ENCODE measurements at regions of chr1 and their contacts with region 1.

Region 1: DNA sequence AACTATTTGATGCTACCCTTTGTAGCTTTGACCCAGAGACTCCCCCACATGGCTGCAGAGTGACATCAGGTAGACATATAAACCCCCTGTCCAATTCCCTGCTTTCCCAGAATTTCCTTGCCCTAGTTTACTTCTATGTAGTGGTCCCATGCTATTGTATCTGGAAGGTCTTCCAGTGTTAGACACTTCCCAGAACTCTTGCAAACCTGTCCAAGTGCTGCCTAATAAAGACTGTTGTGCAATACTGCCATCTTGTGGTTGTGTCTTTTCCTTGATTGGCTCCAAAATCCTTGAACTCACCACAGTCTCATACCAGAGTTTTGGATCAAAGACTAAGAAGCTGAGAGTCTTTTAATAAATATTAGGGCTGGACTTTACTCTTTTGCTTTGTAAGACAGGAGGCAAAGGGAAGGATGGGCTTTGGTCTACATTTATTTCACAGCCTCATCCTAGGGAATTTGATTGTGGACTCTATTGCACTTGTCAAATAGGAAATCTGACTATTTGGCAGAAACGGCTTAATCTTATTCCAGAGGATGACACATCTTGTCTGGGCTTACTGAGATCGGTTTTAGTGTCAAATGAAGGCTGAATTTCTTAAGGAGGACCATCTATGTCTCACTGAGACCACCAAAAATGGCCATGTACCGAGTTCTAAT is 169.9 kb downstream of the LRRC7 start:
- DNase-seq: peak; percentile 61
- ATAC-seq: peak; percentile 89
- H3K4me3 ChIP-seq: no peak overlapping the region
- H3K27ac ChIP-seq: no peak overlapping the region
- H3K4me1 ChIP-seq: no peaks in the 10 kb centered on the region
- H3K27me3 ChIP-seq: no peaks in the 10 kb centered on the region
- CTCF ChIP-seq: peak; percentile 76
- EP300 ChIP-seq: no peak
- POLR2A ChIP-seq: no peak
- RAD21 ChIP-seq: peak; percentile 43; the same call in 1 of the 2 replicates

Region 2: DNA sequence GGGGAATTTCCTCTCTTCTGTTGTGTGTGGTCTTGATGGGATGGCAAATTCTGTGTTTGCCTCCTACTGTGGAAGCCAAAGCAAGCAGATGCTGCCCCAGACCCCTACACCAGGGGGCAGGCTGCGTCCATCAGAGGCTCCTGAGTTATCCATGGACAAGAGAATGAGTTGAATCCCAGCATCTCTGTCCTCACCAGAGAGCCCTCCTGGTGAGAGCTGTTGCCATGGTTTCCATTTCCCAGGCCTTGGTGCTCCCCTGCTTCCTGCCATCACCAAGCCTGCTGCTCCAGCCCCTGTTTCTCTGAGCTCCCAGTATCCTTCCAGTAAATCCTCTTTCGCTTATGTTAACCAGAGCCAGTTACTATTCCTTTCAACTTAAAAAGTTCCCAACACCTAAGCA is 1884.0 kb before region 1 on chr1:
- CTCF ChIA-PET with region 1: no interaction called
- POLR2A ChIA-PET with region 1: no interaction called
- in situ Hi-C with region 1: no loop called
- intact Hi-C with region 1: loop called (anchors 5 kb)
- DNase-seq: peak; percentile 25
- ATAC-seq: peak; percentile 94
- H3K4me3 ChIP-seq: no peak overlapping the region
- H3K27ac ChIP-seq: no peak overlapping the region
- H3K4me1 ChIP-seq: no peaks in the 10 kb centered on the region
- H3K27me3 ChIP-seq: peaks cover 0 to 1% of the 10 kb centered on the region in 2 experiments; a peak in 3 of 5 replicates
- CTCF ChIP-seq: peak; percentile 73
- EP300 ChIP-seq: no peak
- POLR2A ChIP-seq: no peak
- RAD21 ChIP-seq: 0 out of 2 replicates have a peak, but pooled peaks have one; percentile 26

Region 3: GRCh38 chr1:68120136-68120791 is 1617.4 kb before region 1 on chr1:
- CTCF ChIA-PET with region 1: interaction called, 15 read pairs
- POLR2A ChIA-PET with region 1: no interaction called
- in situ Hi-C with region 1: loop called (anchors 5 kb)
- intact Hi-C with region 1: loop called (anchors 1 kb)
- DNase-seq: peak; percentile 60
- ATAC-seq: peak; percentile 78
- H3K4me3 ChIP-seq: no peak overlapping the region
- H3K27ac ChIP-seq: no peak overlapping the region
- H3K4me1 ChIP-seq: peaks cover 8% of the 10 kb centered on the region
- H3K27me3 ChIP-seq: peaks cover 0 to 7% of the 10 kb centered on the region in 2 experiments; a peak in 3 of 5 replicates
- CTCF ChIP-seq: peak; percentile 86
- EP300 ChIP-seq: no peak
- POLR2A ChIP-seq: no peak
- RAD21 ChIP-seq: peak; percentile 66

Region 4: DNA sequence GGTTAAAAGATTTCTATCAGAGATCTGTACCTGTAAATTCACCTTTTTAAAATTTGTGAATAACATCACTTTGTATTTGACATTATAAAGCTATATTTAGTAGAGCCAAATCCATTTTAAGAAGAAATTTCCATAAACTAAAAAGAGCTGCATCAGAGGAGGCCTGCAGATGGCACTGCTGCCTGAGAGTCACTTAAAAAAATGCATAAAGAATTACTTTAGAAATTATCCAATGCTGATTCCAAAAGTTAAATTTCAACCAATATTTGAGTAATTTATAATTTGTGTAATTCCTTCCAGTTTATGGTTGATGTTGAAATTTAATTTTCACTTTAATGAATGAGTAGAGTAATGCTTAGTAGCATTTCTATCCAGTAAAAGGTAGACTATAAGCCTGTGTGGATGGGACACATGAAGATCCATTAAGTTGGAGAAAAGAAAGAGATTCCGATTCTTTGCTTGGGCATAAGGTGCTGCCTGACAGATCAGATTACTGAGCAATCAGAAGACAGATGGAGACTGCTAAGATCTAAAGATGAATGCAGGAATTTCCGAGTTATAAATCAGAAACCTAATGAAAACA is 1267.2 kb before region 1 on chr1:
- CTCF ChIA-PET with region 1: interaction called, 22 read pairs
- POLR2A ChIA-PET with region 1: no interaction called
- in situ Hi-C with region 1: loop called (anchors 5 kb)
- intact Hi-C with region 1: no loop called
- DNase-seq: peak; percentile 3
- ATAC-seq: peak; percentile 41; the same call in 1 of the 3 replicates
- H3K4me3 ChIP-seq: no peak overlapping the region
- H3K27ac ChIP-seq: no peak overlapping the region
- H3K4me1 ChIP-seq: no peaks in the 10 kb centered on the region
- H3K27me3 ChIP-seq: no peaks in the 10 kb centered on the region
- CTCF ChIP-seq: peak; percentile 41
- EP300 ChIP-seq: no peak
- POLR2A ChIP-seq: no peak
- RAD21 ChIP-seq: no peak

Region 5: GRCh38 chr1:68600049-68600661 is 1137.5 kb before region 1 on chr1:
- CTCF ChIA-PET with region 1: interaction called, 8 read pairs
- POLR2A ChIA-PET with region 1: no interaction called
- in situ Hi-C with region 1: no loop called
- intact Hi-C with region 1: loop called (anchors 1 kb)
- DNase-seq: peak; percentile 3
- ATAC-seq: no peak; the same call in 1 of the 3 replicates
- H3K4me3 ChIP-seq: no peak overlapping the region
- H3K27ac ChIP-seq: no peak overlapping the region
- H3K4me1 ChIP-seq: no peaks in the 10 kb centered on the region
- H3K27me3 ChIP-seq: no peaks in the 10 kb centered on the region
- CTCF ChIP-seq: peak; percentile 46
- EP300 ChIP-seq: no peak
- POLR2A ChIP-seq: no peak
- RAD21 ChIP-seq: no peak

Region 6: DNA sequence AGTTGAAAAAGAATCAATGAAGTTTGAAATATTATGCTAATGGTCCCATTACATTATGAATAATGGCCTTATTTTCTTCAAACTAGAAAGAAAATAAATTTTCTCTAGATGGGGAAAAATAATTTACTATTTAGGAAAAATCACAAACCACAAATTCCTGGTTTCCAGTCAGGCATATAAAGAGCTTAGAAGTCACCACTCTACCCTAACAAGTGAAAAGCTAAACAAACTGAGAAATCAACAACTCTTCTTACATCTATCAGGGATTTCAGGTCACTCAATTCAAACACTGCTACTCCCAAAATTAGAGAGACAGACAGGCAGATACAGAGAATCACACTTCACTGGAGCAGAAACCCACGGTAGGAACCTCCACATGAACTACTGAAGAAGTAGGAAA is 252.0 kb before region 1 on chr1:
- CTCF ChIA-PET with region 1: no interaction called
- POLR2A ChIA-PET with region 1: no interaction called
- in situ Hi-C with region 1: no loop called
- intact Hi-C with region 1: no loop called
- DNase-seq: no peak
- ATAC-seq: no peak
- H3K4me3 ChIP-seq: no peak overlapping the region
- H3K27ac ChIP-seq: no peak overlapping the region
- H3K4me1 ChIP-seq: no peaks in the 10 kb centered on the region
- H3K27me3 ChIP-seq: no peaks in the 10 kb centered on the region; a peak in 1 of 5 replicates
- CTCF ChIP-seq: no peak
- EP300 ChIP-seq: no peak
- POLR2A ChIP-seq: no peak
- RAD21 ChIP-seq: no peak

Region 7: DNA sequence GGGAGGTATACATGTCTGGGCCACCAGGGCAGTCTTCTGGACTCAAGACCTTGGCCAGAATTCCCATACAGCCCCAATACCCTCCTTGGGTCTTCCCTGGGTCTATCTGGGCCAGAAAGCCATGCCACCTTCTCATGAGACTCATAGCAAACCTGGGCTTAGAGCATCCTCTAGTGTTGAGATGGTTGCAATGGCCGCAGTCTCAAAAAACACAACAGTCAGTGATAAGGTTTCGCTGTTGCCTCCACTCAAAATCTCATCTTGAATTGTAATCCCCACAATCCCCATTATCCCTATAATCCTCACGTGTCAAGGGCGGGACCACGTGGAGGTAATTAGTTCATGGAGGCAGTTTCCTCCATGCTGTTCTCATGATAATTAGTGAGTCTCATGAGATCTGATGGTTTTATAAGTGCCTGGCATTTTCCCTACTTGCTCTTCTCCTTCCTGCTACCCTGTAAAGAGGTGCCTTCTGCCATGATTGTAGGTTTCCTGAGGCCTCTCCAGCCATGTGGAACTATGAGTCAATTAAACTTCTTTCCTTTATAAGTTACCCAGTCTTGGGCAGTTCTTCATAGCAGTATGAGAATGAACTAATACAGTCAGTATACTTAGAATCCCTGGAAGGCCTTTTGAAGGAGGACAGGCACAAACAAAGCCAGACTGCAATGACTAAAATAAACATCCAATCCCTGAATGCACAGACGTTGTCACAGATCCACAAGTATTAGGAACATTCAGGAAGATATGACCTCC is 750.4 kb after region 1 on chr1:
- CTCF ChIA-PET with region 1: no interaction called
- POLR2A ChIA-PET with region 1: no interaction called
- in situ Hi-C with region 1: no loop called
- intact Hi-C with region 1: loop called (anchors 5 kb)
- DNase-seq: peak; percentile 43
- ATAC-seq: peak; percentile 95
- H3K4me3 ChIP-seq: no peak overlapping the region
- H3K27ac ChIP-seq: no peak overlapping the region
- H3K4me1 ChIP-seq: no peaks in the 10 kb centered on the region
- H3K27me3 ChIP-seq: no peaks in the 10 kb centered on the region
- CTCF ChIP-seq: peak; percentile 87
- EP300 ChIP-seq: no peak
- POLR2A ChIP-seq: no peak
- RAD21 ChIP-seq: peak; percentile 66